ENCODE measurements at regions of chr3 and their contacts with region 1.

Region 1: DNA sequence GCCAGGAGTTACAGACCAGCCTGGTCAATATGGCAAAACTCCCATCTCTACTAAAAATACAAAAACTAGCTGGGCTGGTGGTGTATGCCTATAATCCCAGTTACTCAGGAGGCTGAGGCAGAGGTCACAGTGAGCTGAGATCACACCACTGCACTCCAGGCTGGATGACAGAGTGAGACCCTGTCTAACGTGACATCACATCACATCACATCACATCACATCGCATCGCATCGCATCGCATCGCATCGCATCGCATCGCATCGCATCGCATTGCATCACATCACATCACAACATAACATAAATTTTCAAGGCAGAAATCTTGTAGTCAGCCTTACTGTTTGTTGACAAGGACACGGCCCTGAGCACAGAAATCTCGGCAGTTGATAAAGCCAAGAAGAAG is 44.4 kb downstream of the RBM6 start:
- DNase-seq: no peak

Region 2: GRCh38 chr3:50044976-50045375 is 60.6 kb after region 1 on chr3:
- CTCF ChIA-PET with region 1: interaction called, 10 read pairs
- POLR2A ChIA-PET with region 1: no interaction called
- DNase-seq: no peak

Region 3: GRCh38 chr3:50068134-50068533 is 83.7 kb after region 1 on chr3:
- CTCF ChIA-PET with region 1: no interaction called
- POLR2A ChIA-PET with region 1: no interaction called
- DNase-seq: no peak